ENCODE measurements at regions of chr1 and their contacts with region 1.

Region 1: DNA sequence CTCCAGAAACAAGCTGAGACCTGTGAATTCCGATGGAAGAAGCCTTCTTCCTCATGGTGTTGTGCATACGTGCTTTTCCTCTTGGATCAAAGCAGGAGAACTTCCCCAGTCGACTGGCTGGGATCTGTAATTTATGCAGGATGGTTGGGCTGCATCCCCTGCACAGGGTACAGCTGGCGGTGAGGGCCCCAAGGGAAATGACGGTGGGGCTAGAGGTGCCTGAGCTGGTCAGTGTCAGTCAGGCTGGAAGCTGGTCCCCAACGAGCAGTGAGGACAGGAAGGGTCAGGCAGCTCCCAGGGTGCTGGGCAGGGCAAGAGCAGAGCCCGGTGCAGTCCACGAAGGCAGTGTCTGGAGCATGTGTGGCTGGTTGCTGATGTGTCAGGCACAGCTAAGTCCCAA is 106.7 kb downstream of the CNIH3 start:
- DNase-seq: no peak
- H3K4me3 ChIP-seq: no peak overlapping the region
- H3K27ac ChIP-seq: no peak overlapping the region
- H3K4me1 ChIP-seq: peaks cover 17% of the 10 kb centered on the region
- H3K27me3 ChIP-seq: no peaks in the 10 kb centered on the region
- CTCF ChIP-seq: no peak

Region 2: GRCh38 chr1:224080115-224080774 is 642.6 kb before region 1 on chr1:
- CTCF ChIA-PET with region 1: no interaction called
- POLR2A ChIA-PET with region 1: no interaction called
- intact Hi-C with region 1: no loop called
- DNase-seq: peak; percentile 55 to 93
- H3K4me3 ChIP-seq: peak overlapping the region; percentile 23; the same call in 1 of the 2 replicates
- H3K27ac ChIP-seq: peak overlapping the region; percentile 97
- H3K4me1 ChIP-seq: peaks cover 29% of the 10 kb centered on the region
- H3K27me3 ChIP-seq: no peaks in the 10 kb centered on the region
- CTCF ChIP-seq: no peak

Region 3: DNA sequence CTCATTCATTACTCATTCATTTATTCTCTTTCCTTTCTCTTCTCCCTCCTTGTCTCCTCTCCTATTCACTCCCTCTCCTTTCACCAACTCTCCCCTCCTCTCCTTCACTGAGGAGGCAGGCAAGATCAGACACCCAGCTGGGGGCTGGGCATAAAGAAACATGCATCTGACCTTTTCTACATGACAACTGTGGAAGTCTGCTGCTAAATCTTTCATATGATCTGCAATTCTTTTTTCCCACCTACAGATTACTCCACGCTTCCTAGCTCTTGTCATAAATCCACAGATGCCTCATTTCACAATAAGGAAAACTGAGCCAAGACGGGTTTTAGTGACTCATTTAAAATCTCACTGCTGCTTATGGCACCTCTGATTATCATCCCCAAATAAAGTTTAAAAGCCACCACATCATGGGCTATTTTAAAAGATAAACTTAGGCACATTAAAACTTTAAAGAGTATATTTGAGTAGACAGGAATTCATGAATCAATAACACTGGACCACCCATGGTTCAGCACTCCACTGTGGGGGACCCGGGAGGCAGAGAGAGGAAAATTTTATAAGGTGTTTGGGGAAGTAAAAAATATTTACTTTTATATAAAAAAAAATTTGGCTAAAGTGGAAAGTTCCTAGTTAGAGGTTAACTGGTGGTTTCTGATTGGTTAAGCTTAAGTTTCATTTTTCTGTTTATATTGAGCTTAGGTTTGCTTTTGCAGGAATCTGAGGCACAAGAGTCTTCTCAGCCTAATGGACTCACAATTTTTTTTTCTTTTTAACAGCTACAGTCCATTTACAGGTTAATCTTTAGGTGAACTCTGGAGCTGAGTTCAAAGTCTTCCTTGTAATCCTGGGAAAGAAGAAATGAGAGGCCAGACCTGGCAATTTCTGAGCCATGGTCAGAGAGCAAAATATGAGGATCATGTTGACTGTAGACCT is 150.8 kb after region 1 on chr1:
- CTCF ChIA-PET with region 1: interaction called, 14 read pairs
- POLR2A ChIA-PET with region 1: no interaction called
- intact Hi-C with region 1: no loop called
- DNase-seq: peak in 1 of 2 experiments; percentile 79
- H3K4me3 ChIP-seq: no peak overlapping the region
- H3K27ac ChIP-seq: 0 out of 2 replicates have a peak overlapping the region, but pooled peaks have one; percentile 5
- H3K4me1 ChIP-seq: peaks cover 18% of the 10 kb centered on the region
- H3K27me3 ChIP-seq: no peaks in the 10 kb centered on the region
- CTCF ChIP-seq: no peak

Measured in PC-9 (cell line).